ENCODE measurements at regions of chr19 and their contacts with region 1.

Region 1: GRCh38 chr19:33394006-33394849 is 20.7 kb downstream of the CEBPG start:
- DNase-seq: peak in 1 of 2 donors; percentile 61
- ATAC-seq: peak in 3 of 8 donors; percentile 4 to 46 (median 5)
- H3K4me3 ChIP-seq: no peak overlapping the region
- H3K27ac ChIP-seq: peak overlapping the region in 7 of 10 donors; percentile 1 to 57 (median 15)
- H3K4me1 ChIP-seq: peaks cover 19 to 92% (median 78%) of the 10 kb centered on the region in 9 donors
- H3K27me3 ChIP-seq: no peaks in the 10 kb centered on the region
- CTCF ChIP-seq: no peak

Region 2: GRCh38 chr19:33302175-33302973 is 91.9 kb before region 1 on chr19 and contains the start of gene CEBPA:
- intact Hi-C with region 1: loop called in 1 of 10 experiments (anchors 5 kb)
- DNase-seq: peak; percentile 69 to 82
- ATAC-seq: peak; percentile 79 to 94 (median 89)
- H3K4me3 ChIP-seq: peak within 1 kb of the TSS; percentile 54 to 90 (median 79)
- H3K27ac ChIP-seq: peak within 1 kb of the TSS in 9 of 10 donors; percentile 34 to 86 (median 63)
- H3K4me1 ChIP-seq: peaks cover 3 to 46% (median 22%) of the 10 kb centered on the region in 9 donors
- H3K27me3 ChIP-seq: peaks cover 5 to 51% (median 36%) of the 10 kb centered on the region in 7 donors
- CTCF ChIP-seq: peak in 8 of 9 donors; percentile 24 to 69 (median 48)
- total RNA-seq, gene CEBPA: 0.71 to 7.7 (median 2.8) TPM

Region 3: DNA sequence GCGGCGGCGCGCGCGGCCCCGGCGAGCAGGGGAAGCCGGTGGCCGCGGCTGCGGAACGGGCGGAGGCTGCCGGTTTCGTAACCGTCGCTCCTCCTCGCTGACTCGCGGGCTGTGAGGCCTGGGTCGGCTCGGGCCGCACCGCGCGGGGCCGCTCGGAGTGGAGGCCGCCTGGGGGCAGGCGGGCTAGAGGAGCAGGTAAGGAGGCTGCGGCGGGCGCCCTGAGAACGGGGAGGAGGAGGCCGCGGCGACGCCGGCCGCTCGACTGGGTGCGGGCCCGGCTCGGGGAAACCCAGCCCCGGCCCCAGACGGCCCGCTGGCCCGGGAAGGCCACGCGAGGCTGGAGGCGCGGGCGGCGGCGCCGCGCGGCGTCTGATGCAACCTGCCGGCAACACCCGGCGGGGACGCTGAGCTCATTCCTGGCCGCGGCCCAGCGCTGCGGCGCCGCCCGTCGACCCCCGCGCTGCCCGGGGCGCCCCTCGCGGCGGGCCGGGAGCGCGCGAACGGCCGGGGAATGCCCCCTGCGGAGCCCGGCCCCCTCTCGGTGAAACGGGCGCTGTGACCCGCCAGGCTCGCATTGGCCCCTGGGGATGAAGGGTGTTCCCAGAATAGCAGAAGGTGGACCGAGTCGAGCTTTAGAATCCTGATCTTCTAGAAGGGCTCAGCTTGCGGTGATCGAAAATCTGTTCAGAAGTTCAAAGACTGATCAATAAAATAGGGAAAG is 20.4 kb before region 1 on chr19 and contains the start of gene CEBPG:
- intact Hi-C with region 1: loop called in 1 of 10 experiments (anchors 2 kb)
- DNase-seq: peak; percentile 61 to 64
- ATAC-seq: peak; percentile 26 to 58 (median 43)
- H3K4me3 ChIP-seq: peak within 1 kb of the TSS; percentile 61 to 94 (median 80)
- H3K27ac ChIP-seq: peak within 1 kb of the TSS; percentile 89 to 100 (median 98)
- H3K4me1 ChIP-seq: peaks cover 4 to 52% (median 45%) of the 10 kb centered on the region in 9 donors
- H3K27me3 ChIP-seq: no peaks in the 10 kb centered on the region
- CTCF ChIP-seq: peak in 4 of 9 donors; percentile 29 to 46 (median 37)
- total RNA-seq, gene CEBPG: 10.4 to 19.4 (median 13.4) TPM

Region 4: GRCh38 chr19:33459222-33460090 is 65.2 kb after region 1 on chr19:
- intact Hi-C with region 1: no loop called
- DNase-seq: no peak
- ATAC-seq: no peak
- H3K4me3 ChIP-seq: no peak overlapping the region
- H3K27ac ChIP-seq: no peak overlapping the region
- H3K4me1 ChIP-seq: no peaks in the 10 kb centered on the region
- H3K27me3 ChIP-seq: no peaks in the 10 kb centered on the region
- CTCF ChIP-seq: no peak

Region 5: DNA sequence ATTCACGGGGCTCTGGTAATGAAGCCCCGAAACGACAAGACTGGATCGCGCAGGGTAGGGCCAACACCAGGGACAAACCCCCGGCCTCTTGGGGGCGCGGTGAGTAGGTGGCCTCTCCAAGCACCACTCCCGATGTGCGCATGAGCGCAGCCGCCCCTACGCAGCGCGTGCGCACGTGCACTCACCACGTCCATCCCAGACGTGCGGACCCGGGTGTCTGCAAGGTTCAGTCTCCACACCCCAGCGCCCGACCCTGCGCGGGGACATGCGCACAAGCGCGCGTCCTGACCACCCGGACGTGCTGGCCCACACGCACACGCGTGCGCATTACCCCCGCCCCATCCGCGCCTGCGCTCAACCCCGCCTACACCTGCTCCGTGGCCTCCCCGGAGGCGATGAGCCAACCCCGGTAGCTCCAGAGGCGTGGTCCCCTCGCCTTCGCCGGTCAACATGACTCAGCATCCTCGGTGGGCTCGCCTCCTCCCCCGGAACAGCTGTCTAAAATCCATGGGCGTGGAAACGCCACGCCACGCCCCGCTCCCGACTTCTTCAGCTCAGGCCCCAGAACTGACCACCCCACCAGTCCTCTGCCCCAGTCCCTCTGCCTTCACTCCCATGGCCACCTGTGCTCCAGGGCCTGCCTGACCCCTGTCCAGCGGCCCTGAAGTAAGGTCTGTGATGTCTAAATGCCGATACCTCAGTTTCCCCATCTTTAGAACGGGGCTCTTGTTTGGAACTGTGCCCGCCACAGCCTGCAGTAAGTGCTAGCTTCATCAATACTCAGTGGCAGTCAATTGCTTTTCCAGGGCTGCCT is 965.1 kb after region 1 on chr19:
- intact Hi-C with region 1: loop called in 1 of 10 experiments (anchors 10 kb)
- DNase-seq: peak; percentile 92 to 97
- ATAC-seq: peak; percentile 96 to 98 (median 96)
- H3K4me3 ChIP-seq: peak overlapping the region in 9 of 10 donors; percentile 32 to 64 (median 54)
- H3K27ac ChIP-seq: peak overlapping the region; percentile 67 to 87 (median 80)
- H3K4me1 ChIP-seq: peaks cover 4 to 22% (median 13%) of the 10 kb centered on the region in 9 donors
- H3K27me3 ChIP-seq: no peaks in the 10 kb centered on the region
- CTCF ChIP-seq: peak; percentile 11 to 74 (median 51)